BJ (cell line): ENCODE measurements at regions of chr9 and their contacts with region 1.

Region 1: GRCh38 chr9:78074385-78075291 is 43.0 kb upstream of the GNAQ start:
- DNase-seq: no peak
- H3K4me3 ChIP-seq: no peak overlapping the region
- H3K27me3 ChIP-seq: peaks cover 2% of the 10 kb centered on the region; the same call in 1 of the 2 replicates
- CTCF ChIP-seq: no peak

Region 2: DNA sequence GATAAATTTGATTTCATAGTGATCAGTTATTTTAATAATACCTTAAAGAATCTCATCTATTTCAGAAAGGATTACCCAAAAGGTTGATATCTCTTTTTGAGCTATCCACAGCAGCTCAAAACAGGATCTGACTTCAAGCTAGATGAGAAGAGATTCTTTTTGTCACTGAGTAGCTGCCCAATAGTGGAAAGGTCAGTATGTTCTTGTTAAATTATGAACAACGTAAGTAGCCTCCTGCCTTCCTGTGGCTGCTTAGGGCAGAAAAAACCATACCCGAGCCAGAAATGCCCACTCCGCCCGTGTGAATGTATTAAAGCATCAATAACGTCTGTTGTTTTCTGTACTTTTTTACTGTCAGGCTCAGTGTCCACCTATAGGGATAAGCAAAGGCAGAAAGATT is 1117.4 kb before region 1 on chr9:
- CTCF ChIA-PET with region 1: no interaction called
- POLR2A ChIA-PET with region 1: interaction called, 15 read pairs
- DNase-seq: no peak
- H3K4me3 ChIP-seq: no peak overlapping the region
- H3K27me3 ChIP-seq: no peaks in the 10 kb centered on the region
- CTCF ChIP-seq: no peak